Dendritic cell treated with granulocyte-macrophage colony-stimulating factor and Interleukin-4, amounts not matched to agents 40 ng/mL and 50 ng/mL, for 4 days (primary cell): ENCODE measurements at regions of chr1 and their contacts with region 1.

Region 1: GRCh38 chr1:228921481-228921880 is 186.2 kb downstream of the RHOU start:
- H3K4me3 Mint-ChIP-seq: no peak overlapping the region
- H3K27ac Mint-ChIP-seq: peak overlapping the region; percentile 55
- H3K4me1 Mint-ChIP-seq: peaks cover 44% of the 10 kb centered on the region
- H3K27me3 Mint-ChIP-seq: peaks cover 3% of the 10 kb centered on the region

Region 2: GRCh38 chr1:228555074-228555989 is 366.1 kb before region 1 on chr1:
- intact Hi-C with region 1: no loop called
- H3K4me3 Mint-ChIP-seq: no peak overlapping the region
- H3K27ac Mint-ChIP-seq: no peak overlapping the region
- H3K4me1 Mint-ChIP-seq: no peaks in the 10 kb centered on the region
- H3K27me3 Mint-ChIP-seq: peaks cover 14% of the 10 kb centered on the region

Region 3: DNA sequence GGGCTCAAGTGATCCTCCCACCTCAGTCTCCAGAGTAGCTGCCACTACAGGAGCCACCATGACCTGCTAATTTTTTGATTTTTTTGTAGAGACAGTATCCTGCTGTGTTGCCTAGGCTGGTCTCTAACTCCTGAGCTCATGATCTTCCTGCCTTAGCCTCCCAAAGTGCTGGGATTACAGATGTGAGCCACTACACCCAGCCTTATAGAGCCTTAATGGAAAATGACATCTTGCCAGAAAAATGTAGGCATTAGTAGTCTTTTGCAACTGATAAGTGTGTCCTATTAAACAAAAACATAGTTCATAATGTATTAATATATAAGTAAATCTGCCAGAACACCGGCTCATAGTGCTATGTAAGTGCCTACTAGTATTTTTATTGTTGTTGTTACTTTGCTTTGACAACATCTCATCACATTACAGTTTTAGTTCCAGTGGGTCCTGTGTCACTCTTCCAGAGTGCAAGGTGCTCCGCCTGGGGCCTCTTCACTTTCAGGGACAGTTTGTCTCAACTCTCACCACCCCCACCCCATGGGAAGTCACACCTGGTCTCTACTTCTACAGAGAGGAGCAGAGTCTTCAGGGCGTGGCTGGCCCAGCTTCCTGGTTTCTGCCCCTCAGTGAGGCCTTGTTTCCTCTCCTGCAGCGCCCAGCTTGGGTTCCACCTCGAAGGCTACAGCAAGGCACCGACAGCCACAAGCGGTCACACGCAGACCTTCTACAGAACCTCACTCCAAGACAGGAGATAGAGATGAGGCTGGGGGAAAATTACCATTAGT is 156.1 kb before region 1 on chr1:
- intact Hi-C with region 1: loop called (anchors 10 kb)
- H3K4me3 Mint-ChIP-seq: no peak overlapping the region
- H3K27ac Mint-ChIP-seq: no peak overlapping the region
- H3K4me1 Mint-ChIP-seq: peaks cover 5% of the 10 kb centered on the region
- H3K27me3 Mint-ChIP-seq: peaks cover 6% of the 10 kb centered on the region

Region 4: DNA sequence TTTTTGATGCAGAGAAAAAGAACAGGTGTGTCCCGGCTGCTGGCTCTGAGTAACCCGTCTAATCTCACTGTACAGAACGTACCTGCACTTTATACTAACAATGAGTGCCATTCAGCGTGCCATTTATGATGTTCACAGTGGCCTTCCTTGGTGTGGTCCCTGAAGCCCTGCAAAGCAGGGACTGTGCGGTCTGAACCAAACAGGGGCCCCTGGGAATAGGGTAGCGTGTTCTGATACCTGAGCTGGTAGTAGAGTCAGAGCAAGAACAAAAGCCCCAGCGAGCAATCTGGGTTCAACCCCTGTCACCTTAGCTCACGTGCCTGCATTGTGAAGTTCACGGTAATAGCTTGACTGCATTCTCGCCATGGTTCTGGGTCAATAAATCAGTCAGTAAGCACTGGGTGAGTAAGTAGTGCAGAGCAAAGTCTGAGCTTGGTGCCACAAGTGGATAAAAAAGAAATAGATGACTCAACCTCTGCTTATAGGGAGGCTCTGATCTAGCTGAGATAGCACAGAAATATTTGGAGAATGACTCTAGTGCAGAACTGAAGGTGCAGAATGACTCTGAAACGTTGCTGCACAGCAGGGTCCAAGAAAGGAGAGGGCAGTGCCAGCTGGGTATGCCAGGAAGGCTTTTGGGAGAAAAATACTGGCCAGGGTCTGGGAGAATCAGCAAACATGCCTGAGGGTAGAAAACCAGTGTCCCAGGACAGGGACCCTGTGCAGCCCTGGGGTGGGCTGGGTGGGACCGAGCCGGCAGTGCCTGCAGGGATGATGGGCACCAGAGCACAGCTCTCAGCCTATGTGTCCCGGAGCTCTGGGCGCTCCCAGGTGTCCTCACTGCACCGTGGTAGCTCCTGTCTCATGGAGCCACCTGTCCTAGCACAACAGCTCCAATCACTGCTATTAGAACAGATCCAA is 60.3 kb before region 1 on chr1:
- intact Hi-C with region 1: no loop called
- H3K4me3 Mint-ChIP-seq: no peak overlapping the region
- H3K27ac Mint-ChIP-seq: no peak overlapping the region
- H3K4me1 Mint-ChIP-seq: peaks cover 40% of the 10 kb centered on the region
- H3K27me3 Mint-ChIP-seq: peaks cover 7% of the 10 kb centered on the region

Region 5: DNA sequence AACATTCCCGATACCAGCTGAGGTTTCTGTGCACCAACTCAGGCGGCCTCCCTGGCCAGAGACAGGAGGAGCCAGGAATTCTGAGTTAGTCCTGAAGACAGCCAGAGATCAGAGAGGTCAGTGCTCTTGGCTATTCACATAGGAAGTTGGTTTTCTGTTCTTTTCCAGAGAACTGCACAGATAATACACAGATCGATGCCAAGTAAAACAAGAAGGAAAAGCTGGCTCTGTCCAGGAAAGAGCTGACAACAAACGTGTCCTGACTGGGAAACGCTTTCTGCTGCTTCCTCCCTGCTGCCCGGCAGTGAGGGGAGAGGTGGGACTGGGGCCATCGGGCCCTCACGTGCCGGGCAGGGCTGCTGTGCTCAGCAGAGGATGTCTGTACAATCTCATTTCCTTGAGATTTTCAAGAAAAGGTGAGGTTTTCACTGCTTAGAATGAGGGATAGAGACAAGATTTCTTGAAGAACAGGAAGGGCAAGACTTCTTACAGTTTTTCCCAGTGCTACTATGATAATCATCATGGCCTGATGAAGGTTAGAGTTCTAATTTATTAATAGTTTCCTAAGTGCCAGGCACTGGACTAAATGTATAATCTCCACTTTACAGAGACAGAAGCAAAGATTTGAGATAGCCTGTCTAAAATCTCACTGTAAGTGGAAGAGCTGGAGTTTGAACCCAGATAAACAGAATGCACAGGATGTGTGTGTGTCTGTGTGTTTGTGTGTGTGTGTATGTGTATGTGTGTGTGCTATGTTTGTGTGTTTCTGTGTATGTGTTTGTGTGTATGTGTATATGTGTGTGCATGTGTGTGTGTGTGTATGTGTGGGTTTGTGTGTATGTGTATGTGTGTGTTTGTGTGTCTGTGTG is 138.4 kb after region 1 on chr1:
- intact Hi-C with region 1: no loop called
- H3K4me3 Mint-ChIP-seq: no peak overlapping the region
- H3K27ac Mint-ChIP-seq: no peak overlapping the region
- H3K4me1 Mint-ChIP-seq: peaks cover 47% of the 10 kb centered on the region
- H3K27me3 Mint-ChIP-seq: peaks cover 15% of the 10 kb centered on the region